ENCODE measurements at regions of chr1 and their contacts with region 1.

Region 1: GRCh38 chr1:96544831-96545221 is 176.8 kb upstream of the PTBP2 start:
- DNase-seq: no peak

Region 2: DNA sequence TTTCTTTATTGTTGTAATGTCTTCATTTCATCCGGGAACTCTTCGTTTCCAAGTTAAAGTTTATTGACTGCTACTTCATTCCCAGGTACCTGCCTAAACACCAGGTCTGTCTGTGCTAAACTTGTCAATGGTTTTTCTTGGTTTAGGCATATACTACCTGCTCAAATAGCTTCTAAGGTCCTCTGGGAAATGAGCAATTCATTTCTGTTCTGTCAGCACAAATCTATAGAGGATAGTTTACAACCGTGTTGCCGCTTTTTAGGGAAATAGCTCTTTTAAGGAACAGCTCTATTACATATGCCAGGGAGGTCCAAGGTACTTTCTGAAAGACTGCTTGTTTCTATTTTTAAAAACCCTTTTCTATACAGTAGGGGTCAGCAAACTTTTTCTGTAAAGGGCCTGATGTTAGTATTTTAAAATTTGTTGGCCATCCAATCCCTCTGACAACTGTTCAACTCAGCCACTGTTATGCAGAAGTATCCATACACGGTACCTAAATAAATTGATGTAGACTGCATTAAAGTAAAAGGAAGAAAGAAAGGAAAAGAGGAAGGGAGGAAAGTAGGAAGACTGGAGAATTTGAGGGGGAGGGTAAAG is 46.0 kb before region 1 on chr1:
- intact Hi-C with region 1: no loop called
- DNase-seq: no peak

Region 3: GRCh38 chr1:96523952-96524499 is 20.8 kb before region 1 on chr1:
- intact Hi-C with region 1: no loop called
- DNase-seq: no peak

Region 4: GRCh38 chr1:96596226-96596922 is 51.5 kb after region 1 on chr1:
- intact Hi-C with region 1: loop called in 1 of 2 experiments (anchors 5 kb)
- DNase-seq: no peak

Measured in posterior vena cava (tissue), 2 donors.